Activated T-helper 1 cell treated with anti-CD3 and anti-CD28 coated beads, Interleukin-12 subunit alpha, Interleukin-12 subunit beta, Interleukin-2, Interleukin-4 antibody, amounts not matched to agents 30 ng/mL and 10 ng/mL and 1 ng/mL, durations not matched to agents 14 hours and 24 hours and 36 hours (primary cell): ENCODE measurements at regions of chr4 and their contacts with region 1.

Region 1: GRCh38 chr4:76689241-76689817 is 208.6 kb downstream of the SOWAHB start:
- DNase-seq: no peak
- H3K4me3 Mint-ChIP-seq: peak overlapping the region; percentile 72
- H3K27ac Mint-ChIP-seq: no peak overlapping the region
- H3K4me1 Mint-ChIP-seq: peaks cover 27% of the 10 kb centered on the region
- H3K27me3 Mint-ChIP-seq: peaks cover 74% of the 10 kb centered on the region

Region 2: DNA sequence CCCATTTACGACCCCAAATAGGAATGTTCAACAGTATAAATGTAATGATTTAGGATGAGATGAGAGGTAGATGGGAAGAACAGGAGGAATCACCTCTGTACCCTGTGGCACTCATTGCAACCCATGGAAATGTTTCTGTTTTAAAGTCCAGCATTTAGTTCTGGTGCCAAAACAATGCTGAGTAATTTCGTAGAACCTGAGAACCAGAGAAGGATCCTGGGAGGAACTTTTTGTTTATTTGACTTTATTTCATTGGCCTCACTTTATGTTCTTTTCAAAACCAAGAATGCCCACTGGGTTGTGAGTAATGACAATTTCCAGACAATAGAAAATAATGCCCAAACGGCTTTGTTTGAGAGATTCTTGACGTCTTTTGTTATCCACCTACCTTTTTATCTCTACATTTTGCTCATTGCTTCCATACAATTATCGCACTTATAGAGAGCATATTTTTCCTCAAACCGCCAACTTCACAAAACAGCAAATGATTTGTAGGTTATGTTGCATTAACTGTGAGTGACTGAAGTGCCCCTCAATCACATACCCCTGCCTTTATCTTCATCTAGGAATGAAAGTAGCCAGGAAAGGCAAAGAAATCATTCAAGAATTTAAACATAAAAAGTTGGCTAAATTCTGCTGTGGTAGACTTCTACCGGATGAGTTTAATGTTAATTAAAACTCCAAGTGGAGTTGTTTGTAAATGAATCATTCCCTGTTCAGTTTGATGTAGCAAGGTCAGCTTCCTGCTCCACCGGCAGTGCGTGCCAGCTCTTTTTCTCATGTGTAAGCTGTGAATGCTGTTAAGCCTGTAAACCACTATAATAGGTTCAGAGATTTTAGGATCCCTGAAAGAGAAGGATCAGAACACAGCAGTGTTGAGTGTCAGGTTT is 142.8 kb before region 1 on chr4:
- intact Hi-C with region 1: loop called (anchors 10 kb)
- DNase-seq: no peak
- H3K4me3 Mint-ChIP-seq: no peak overlapping the region
- H3K27ac Mint-ChIP-seq: no peak overlapping the region
- H3K4me1 Mint-ChIP-seq: peaks cover 22% of the 10 kb centered on the region
- H3K27me3 Mint-ChIP-seq: peaks cover 4% of the 10 kb centered on the region

Region 3: DNA sequence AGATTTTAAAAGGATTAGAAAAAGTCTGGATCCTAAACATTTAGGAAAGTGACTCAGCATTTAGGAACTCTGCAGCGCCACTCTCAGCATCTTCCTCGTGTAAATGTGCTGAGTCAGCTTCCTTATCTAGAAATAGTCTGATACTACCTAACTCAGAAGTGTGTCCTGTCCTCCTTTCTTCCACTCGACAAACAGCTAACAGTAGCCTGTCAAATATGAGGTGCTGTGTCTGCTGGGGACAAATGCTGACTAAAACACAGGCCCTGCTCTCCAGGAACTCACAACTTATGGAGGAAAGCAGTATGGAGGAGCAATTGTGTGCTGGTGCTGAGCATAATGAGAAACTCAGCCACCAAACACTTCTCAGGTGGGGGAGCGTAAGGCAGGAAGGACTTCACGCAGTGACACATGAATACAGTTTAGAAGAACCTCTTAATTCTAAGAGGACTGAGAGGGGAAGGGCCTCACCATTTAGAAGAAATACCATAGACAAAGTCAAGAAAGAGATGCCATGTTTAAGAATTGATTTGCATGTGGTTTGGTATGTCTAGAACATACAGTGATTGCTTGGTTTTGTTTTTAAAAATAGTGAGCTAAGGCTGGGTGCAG is 83.3 kb after region 1 on chr4:
- intact Hi-C with region 1: no loop called
- DNase-seq: no peak
- H3K4me3 Mint-ChIP-seq: no peak overlapping the region
- H3K27ac Mint-ChIP-seq: no peak overlapping the region
- H3K4me1 Mint-ChIP-seq: no peaks in the 10 kb centered on the region
- H3K27me3 Mint-ChIP-seq: no peaks in the 10 kb centered on the region

Region 4: DNA sequence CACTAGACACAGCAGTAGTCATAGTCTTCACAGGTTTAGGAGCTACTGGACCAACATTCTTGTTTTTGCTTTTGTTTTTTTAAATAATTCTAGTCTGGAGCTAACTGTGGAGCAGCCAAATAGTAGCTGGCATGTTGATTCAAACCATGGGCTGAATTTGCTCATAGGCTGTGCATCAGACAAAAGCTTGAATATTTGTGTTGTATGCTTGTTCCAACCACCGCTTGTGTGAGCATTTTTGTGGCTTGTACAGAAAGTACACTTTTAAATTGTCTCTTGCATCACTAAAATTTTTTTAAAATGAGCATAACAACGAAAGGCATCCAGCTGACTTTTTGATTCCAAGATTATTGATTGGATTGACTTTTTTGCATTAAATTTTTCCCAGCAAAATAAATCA is 346.9 kb after region 1 on chr4:
- intact Hi-C with region 1: loop called (anchors 10 kb)
- DNase-seq: no peak
- H3K4me3 Mint-ChIP-seq: no peak overlapping the region
- H3K27ac Mint-ChIP-seq: no peak overlapping the region
- H3K4me1 Mint-ChIP-seq: peaks cover 13% of the 10 kb centered on the region
- H3K27me3 Mint-ChIP-seq: peaks cover 10% of the 10 kb centered on the region